WTC11 (cell line): ENCODE measurements at regions of chr2 and their contacts with region 1.

Region 1: DNA sequence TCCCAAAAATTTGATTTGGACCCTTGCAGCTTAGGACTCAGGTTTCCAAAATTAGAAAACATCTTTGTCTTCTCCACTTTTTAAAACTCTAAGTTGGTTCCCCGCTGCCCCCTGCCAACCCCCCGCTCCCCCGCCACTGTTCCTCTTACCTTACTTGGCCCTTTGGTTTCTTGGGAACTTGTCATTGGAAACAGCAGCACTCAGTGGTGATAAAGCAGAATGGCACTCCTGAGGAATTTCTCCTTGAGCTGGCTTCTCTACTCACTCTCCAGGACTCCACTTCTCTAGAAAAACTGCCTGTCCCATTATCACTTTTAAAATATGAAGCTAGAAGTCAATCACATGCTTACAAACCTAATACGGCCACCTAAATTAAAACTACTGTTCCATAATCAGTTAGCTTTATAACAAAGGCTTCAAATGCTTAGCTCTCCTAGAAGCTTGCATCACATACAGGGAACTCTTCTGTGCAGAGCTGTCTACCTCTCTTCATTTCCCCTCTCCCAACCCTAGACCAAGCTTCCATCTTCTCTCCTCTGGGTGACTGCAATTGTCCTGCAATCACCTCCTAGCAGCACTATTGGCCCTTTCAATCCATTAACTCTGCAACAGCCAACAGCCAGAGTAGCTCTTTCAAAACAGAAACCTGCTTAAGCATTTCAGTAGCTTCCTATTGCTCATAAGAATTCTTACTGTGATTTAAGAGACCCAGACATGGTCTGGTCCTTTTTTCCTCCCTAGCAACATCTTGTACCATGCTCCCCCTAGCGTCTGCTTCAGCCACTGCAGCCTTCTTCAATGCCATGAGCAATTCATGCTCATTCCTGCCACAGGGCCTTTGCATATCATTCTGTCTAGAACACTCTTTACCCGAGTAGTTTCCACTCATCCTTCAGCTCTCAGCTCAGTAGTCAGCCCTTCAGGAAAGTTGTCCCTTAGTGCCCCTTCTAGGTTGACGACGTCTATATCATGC is 15.2 kb upstream of the PLEKHM3 start:
- DNase-seq: peak; percentile 78
- ATAC-seq: peak; percentile 87
- H3K4me3 Mint-ChIP-seq: no peak overlapping the region
- H3K27ac Mint-ChIP-seq: peak overlapping the region; percentile 78
- H3K4me1 Mint-ChIP-seq: peaks cover 29% of the 10 kb centered on the region
- H3K27me3 Mint-ChIP-seq: no peaks in the 10 kb centered on the region
- CTCF ChIP-seq: peak; percentile 82

Region 2: DNA sequence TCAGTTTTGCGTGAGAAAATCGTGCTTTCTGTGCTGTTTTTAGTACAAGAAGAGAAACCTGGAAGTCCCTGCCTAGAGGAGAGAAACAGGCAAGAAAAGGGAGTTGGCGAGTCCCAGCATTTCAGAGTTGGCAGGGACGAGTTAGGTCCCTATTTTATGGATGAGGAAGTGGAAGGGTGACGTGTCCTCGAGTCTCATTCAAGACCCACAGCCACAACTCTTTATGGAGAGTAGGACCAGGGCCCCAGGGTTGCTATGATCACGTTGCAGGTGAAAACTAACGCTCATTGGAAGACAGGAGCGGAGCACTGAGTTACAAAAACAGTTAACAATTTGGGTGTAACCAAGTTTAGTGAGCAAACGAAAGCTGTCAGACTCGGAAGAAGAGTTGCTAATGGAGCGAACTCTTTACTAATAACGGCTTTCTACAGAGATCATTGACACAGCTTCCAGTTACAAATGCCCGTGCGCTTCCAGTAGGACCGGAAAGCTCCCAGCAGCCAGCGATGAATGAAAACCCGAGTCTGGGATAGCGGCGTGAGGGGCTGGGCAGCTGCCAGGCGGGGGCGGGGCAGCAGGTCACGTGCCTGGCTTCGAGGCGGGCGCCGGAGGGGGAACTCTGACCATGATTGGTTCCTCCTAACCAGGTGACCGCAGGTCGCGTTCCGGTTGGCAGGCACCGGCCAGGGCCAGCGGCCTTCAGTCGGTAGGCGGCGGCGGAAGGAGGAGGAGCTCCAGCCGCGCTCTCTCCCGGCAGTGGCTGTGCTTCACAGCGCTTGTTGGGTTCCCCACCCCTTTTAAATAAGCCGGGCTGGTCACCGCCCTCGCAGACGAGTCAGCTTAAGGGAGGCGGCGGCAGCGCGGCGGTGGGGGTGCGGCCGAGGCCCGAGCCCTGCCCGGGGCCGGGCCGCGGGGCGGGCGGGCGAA is 329.4 kb before region 1 on chr2 and contains the start of gene CCNYL1:
- CTCF ChIA-PET with region 1: interaction called, 13 read pairs
- POLR2A ChIA-PET with region 1: interaction called, 4 read pairs
- DNase-seq: peak; percentile 99
- ATAC-seq: peak; percentile 98
- H3K4me3 Mint-ChIP-seq: peak within 1 kb of the TSS; percentile 99
- H3K27ac Mint-ChIP-seq: peak within 1 kb of the TSS; percentile 94
- H3K4me1 Mint-ChIP-seq: peaks cover 27% of the 10 kb centered on the region
- H3K27me3 Mint-ChIP-seq: no peaks in the 10 kb centered on the region
- CTCF ChIP-seq: no peak
- total RNA-seq, gene CCNYL1: 26.6 to 31.6 TPM (median 28.1 TPM) in 3 replicates

Region 3: DNA sequence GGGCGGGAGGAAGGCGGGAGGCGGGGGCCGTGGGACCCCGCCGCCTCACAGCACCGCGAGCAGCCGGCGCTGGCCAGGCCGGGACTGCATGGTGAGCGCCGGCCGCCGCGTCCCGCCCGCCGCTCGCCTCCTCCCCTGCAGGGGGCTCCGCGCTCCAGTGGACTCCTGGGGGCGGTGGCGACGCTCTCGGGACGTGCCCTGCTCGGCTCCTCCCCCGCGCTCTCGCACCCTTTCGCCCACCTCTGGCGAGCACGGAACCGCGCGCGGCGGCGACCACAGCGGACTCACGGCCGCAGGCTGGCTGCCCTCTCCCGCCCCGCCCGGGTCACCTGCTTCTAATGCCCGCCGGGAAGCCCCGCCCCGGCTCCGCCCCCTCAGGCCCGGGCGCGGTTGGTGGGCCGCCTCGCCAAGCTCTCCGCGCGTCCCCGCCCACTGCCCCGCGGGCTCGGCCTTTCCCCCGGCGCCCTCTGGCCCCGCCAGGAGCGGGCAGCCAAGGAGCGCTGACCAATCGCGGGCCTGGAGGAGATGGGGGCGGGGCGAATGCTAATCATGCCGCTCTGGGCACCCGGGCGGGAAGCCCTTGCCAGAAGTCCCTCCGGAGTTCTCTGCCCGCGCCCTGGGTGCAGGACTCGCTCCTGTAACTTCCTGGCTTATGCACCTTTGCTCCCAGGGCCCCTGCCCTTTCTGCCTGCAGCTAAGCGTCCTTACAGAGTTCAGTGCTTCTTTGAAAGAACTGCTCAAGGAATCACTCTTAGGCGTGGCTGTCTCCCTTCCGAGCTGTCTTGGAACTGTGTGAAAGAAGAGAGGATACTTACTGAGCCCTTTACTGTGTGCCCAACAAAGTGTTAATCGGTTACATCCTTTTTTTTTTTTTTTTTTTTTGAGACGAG is 270.6 kb before region 1 on chr2 and contains the start of gene FZD5:
- CTCF ChIA-PET with region 1: interaction called, 95 read pairs
- POLR2A ChIA-PET with region 1: interaction called, 5 read pairs
- DNase-seq: peak; percentile 99
- ATAC-seq: peak; percentile 82
- H3K4me3 Mint-ChIP-seq: peak within 1 kb of the TSS; percentile 94
- H3K27ac Mint-ChIP-seq: peak within 1 kb of the TSS; percentile 98
- H3K4me1 Mint-ChIP-seq: peaks cover 63% of the 10 kb centered on the region
- H3K27me3 Mint-ChIP-seq: no peaks in the 10 kb centered on the region
- CTCF ChIP-seq: no peak
- total RNA-seq, gene FZD5: 52.8 to 103 TPM (median 53.7 TPM) in 3 replicates

Region 4: DNA sequence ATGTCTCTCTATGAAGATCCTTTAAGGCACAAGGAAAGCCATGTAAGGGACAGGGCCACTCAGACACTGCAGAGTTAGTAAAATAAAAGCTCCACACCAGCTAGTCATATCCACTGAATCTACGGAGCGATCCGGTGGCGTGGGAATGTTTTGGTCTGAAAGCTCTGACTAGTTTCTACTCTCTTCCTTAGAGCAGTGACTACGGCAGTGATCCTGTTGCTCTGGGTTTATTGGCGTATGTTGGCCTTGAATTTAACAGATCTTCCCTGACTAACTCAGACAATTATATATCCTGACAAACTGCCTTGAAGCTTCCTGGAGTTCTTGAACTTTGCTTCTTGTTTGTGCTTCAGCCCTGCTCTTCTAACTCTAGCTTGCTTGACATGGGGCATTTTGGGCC is 155.5 kb before region 1 on chr2:
- CTCF ChIA-PET with region 1: interaction called, 10 read pairs
- POLR2A ChIA-PET with region 1: no interaction called
- DNase-seq: no peak
- ATAC-seq: no peak
- H3K4me3 Mint-ChIP-seq: no peak overlapping the region
- H3K27ac Mint-ChIP-seq: peak overlapping the region; percentile 16; the same call in 1 of the 2 replicates
- H3K4me1 Mint-ChIP-seq: peaks cover 40% of the 10 kb centered on the region
- H3K27me3 Mint-ChIP-seq: no peaks in the 10 kb centered on the region
- CTCF ChIP-seq: no peak

Region 5: GRCh38 chr2:207967121-207967520 is 73.4 kb before region 1 on chr2:
- CTCF ChIA-PET with region 1: interaction called, 18 read pairs
- POLR2A ChIA-PET with region 1: no interaction called
- DNase-seq: no peak
- ATAC-seq: no peak
- H3K4me3 Mint-ChIP-seq: no peak overlapping the region
- H3K27ac Mint-ChIP-seq: no peak overlapping the region
- H3K4me1 Mint-ChIP-seq: peaks cover 55% of the 10 kb centered on the region
- H3K27me3 Mint-ChIP-seq: peaks cover 3% of the 10 kb centered on the region; the same call in 1 of the 2 replicates
- CTCF ChIP-seq: no peak

Region 6: GRCh38 chr2:208025037-208025813 is 15.3 kb before region 1 on chr2 and contains the start of gene PLEKHM3:
- CTCF ChIA-PET with region 1: interaction called, 24 read pairs
- POLR2A ChIA-PET with region 1: no interaction called
- DNase-seq: peak; percentile 88
- ATAC-seq: peak; percentile 95
- H3K4me3 Mint-ChIP-seq: peak within 1 kb of the TSS; percentile 92
- H3K27ac Mint-ChIP-seq: peak within 1 kb of the TSS; percentile 95
- H3K4me1 Mint-ChIP-seq: peaks cover 11% of the 10 kb centered on the region
- H3K27me3 Mint-ChIP-seq: no peaks in the 10 kb centered on the region
- CTCF ChIP-seq: no peak
- total RNA-seq, gene PLEKHM3: 4.3 to 5.8 TPM (median 4.5 TPM) in 3 replicates

Region 7: GRCh38 chr2:208092093-208092832 is 51.8 kb after region 1 on chr2:
- CTCF ChIA-PET with region 1: no interaction called
- POLR2A ChIA-PET with region 1: no interaction called
- DNase-seq: no peak
- ATAC-seq: no peak
- H3K4me3 Mint-ChIP-seq: no peak overlapping the region
- H3K27ac Mint-ChIP-seq: no peak overlapping the region
- H3K4me1 Mint-ChIP-seq: no peaks in the 10 kb centered on the region
- H3K27me3 Mint-ChIP-seq: no peaks in the 10 kb centered on the region
- CTCF ChIP-seq: no peak

Region 8: DNA sequence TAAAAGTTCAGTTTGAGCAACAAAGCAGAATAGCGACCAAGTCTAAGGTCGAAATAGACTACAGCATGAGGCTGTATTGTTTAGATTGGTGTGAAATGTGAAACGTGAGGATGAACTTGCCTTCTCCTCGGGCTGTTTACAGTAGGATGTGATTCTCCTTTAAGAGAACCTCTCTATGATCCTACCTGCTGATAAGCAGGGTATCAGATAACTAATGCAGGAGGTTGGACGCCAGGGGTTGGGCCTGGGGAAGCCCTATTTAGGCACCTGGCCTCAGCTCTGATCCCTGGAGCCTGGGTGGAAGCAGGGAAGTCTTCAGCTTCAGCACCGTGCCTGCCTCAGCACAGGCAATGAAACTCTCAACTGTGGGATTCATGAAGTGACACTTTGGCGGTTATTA is 72.5 kb after region 1 on chr2:
- CTCF ChIA-PET with region 1: no interaction called
- POLR2A ChIA-PET with region 1: no interaction called
- DNase-seq: peak; percentile 72
- ATAC-seq: peak; percentile 96
- H3K4me3 Mint-ChIP-seq: peak overlapping the region; percentile 67
- H3K27ac Mint-ChIP-seq: peak overlapping the region; percentile 91
- H3K4me1 Mint-ChIP-seq: peaks cover 35% of the 10 kb centered on the region
- H3K27me3 Mint-ChIP-seq: no peaks in the 10 kb centered on the region
- CTCF ChIP-seq: no peak

Region 9: GRCh38 chr2:208451061-208451460 is 410.6 kb after region 1 on chr2:
- CTCF ChIA-PET with region 1: no interaction called
- POLR2A ChIA-PET with region 1: no interaction called
- DNase-seq: no peak
- ATAC-seq: no peak
- H3K4me3 Mint-ChIP-seq: no peak overlapping the region
- H3K27ac Mint-ChIP-seq: no peak overlapping the region
- H3K4me1 Mint-ChIP-seq: peaks cover 3% of the 10 kb centered on the region; the same call in 1 of the 2 replicates
- H3K27me3 Mint-ChIP-seq: no peaks in the 10 kb centered on the region
- CTCF ChIP-seq: no peak